PC-9 (cell line): ENCODE measurements at regions of chr3 and their contacts with region 1.

Region 1: DNA sequence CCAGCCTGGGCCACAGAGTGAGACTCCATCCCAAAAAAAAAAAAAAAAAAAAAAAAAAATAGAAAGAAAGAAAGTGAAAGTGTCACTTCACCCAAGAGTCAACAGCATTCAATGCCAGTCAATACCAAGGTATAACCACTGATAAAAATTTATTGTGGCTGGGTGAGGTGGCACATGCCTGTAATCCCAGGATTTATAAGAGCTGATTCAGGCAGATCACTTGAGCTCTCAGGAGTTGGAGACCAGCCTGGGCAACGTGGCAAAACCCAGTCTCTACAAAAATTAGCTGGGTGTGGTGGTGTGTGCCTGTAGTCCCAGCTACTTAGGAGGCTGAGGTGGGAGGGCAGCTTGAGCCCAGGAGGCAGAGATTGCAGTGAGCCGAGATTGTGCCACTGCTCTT is 46.5 kb upstream of the PIK3CB start:
- DNase-seq: no peak
- H3K4me3 ChIP-seq: no peak overlapping the region
- H3K27ac ChIP-seq: no peak overlapping the region
- H3K4me1 ChIP-seq: no peaks in the 10 kb centered on the region
- H3K27me3 ChIP-seq: no peaks in the 10 kb centered on the region
- CTCF ChIP-seq: no peak

Region 2: DNA sequence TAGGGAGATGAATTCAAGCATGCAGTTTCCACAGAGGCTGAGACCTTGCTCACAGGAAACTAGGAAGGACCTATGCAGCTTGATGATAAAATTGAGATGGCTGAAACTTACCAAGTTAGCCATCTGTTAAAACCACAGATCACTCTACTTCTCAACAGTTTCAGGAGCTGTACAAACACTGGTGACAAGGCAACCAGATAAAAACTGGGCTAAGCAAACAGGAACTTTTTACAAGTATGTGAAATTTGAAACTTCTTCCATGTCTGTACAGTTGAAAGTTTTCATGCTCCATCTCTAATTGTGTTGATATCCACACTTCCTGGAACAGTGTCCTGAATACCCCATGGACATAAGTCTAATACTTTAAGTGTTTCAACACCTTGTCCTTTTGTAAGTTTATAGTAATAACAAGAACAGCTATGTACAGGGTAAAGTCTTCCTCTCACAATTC is 194.4 kb before region 1 on chr3:
- CTCF ChIA-PET with region 1: interaction called, 14 read pairs
- POLR2A ChIA-PET with region 1: no interaction called
- intact Hi-C with region 1: no loop called
- DNase-seq: peak; percentile 37 to 92
- H3K4me3 ChIP-seq: no peak overlapping the region
- H3K27ac ChIP-seq: peak overlapping the region; percentile 65
- H3K4me1 ChIP-seq: peaks cover 27% of the 10 kb centered on the region
- H3K27me3 ChIP-seq: no peaks in the 10 kb centered on the region
- CTCF ChIP-seq: no peak